ENCODE measurements at regions of chr2 and their contacts with region 1.

Region 1: GRCh38 chr2:96260404-96261260 is 5.2 kb downstream of the TMEM127 start:
- DNase-seq: peak; percentile 90 to 96 (median 93)
- H3K4me3 ChIP-seq: peak overlapping the region in 2 of 3 experiments; percentile 1 to 67
- H3K4me3 Mint-ChIP-seq: peak overlapping the region; percentile 69 to 84
- H3K27ac ChIP-seq: peak overlapping the region; percentile 94 to 99
- H3K27ac Mint-ChIP-seq: peak overlapping the region; percentile 97 to 100 (median 98)
- H3K4me1 ChIP-seq: peaks cover 82 to 94% of the 10 kb centered on the region in 2 donors
- H3K4me1 Mint-ChIP-seq: peaks cover 89% of the 10 kb centered on the region
- H3K27me3 ChIP-seq: no peaks in the 10 kb centered on the region
- H3K27me3 Mint-ChIP-seq: peaks cover 0 to 5% (median 0%) of the 10 kb centered on the region in 3 donors
- CTCF ChIP-seq: no peak

Region 2: GRCh38 chr2:96195410-96196066 is 65.1 kb before region 1 on chr2:
- intact Hi-C with region 1: no loop called
- DNase-seq: no peak
- H3K4me3 ChIP-seq: no peak overlapping the region
- H3K4me3 Mint-ChIP-seq: no peak overlapping the region
- H3K27ac ChIP-seq: peak overlapping the region in 1 of 2 donors; percentile 50
- H3K27ac Mint-ChIP-seq: peak overlapping the region in 2 of 7 donors; percentile 52 to 85
- H3K4me1 ChIP-seq: peaks cover 16 to 25% of the 10 kb centered on the region in 2 donors
- H3K4me1 Mint-ChIP-seq: peaks cover 26% of the 10 kb centered on the region
- H3K27me3 ChIP-seq: no peaks in the 10 kb centered on the region
- H3K27me3 Mint-ChIP-seq: no peaks in the 10 kb centered on the region
- CTCF ChIP-seq: no peak

Region 3: DNA sequence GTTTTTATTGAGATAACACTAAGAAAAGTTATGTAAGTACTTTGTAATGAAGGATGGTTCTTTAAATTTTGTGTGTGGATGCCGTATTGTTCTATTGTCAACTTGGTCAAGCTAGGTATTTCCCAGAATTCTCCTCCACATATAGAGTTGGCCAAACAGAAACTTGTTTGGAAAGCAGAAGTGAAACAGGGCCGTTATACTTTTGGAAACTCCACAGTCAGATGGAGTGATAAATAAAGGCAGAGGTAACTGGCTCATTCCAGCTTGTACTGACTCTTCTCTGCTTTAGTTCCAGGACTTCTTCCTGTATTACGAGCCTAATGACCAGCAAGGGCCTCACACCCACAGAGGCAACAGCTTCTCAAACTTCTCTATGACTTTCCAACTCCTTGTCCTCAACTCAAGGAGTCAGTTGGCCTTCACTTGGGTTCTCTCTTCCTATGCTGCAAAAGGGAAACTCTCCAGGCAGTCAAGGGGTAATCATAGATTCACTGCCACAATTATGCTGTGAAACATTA is 35.6 kb before region 1 on chr2:
- intact Hi-C with region 1: loop called in 1 of 2 experiments (anchors 5 kb)
- DNase-seq: peak; percentile 60 to 96 (median 87)
- H3K4me3 ChIP-seq: peak overlapping the region in 1 of 3 experiments; percentile 51
- H3K4me3 Mint-ChIP-seq: peak overlapping the region in 1 of 2 donors; percentile 33
- H3K27ac ChIP-seq: peak overlapping the region; percentile 89 to 90
- H3K27ac Mint-ChIP-seq: peak overlapping the region; percentile 78 to 97 (median 96)
- H3K4me1 ChIP-seq: peaks cover 40% of the 10 kb centered on the region in 2 donors
- H3K4me1 Mint-ChIP-seq: peaks cover 40% of the 10 kb centered on the region
- H3K27me3 ChIP-seq: no peaks in the 10 kb centered on the region
- H3K27me3 Mint-ChIP-seq: no peaks in the 10 kb centered on the region
- CTCF ChIP-seq: no peak

Region 4: DNA sequence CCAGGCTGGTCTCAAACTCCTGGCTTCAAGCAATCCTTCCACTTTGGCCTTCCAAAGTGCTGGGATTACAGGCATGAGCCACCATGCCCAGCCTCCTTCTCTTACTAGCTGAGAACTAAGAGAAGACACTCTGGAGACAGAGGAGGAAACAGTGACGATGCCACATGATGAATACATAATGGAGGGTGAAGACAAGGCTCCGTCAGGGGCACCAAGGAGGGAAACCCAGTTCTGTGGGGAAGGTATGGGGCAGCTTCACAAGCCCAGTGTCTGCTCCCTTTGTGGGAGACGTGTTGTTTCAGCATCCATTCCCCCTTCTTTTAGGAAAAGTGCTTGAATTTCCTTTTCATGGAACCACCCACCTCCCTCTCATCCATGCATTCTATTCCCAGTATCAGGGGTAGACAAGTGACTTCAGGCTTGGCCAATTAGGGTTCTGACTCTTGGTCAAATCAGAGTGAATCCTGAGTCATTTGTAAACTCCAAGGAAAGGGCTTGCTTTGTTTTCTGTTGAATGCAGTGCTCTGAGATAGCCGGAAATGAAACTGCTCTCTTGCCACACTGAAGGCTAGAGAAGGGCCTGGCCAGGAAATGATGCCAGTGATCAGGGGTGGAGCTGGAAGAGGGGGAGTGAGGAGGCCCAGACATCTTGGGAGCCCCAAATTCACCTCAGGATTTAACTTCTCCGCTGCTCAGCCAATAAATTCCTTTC is 18.6 kb before region 1 on chr2:
- intact Hi-C with region 1: loop called (anchors 2 kb)
- DNase-seq: peak; percentile 92 to 97 (median 96)
- H3K4me3 ChIP-seq: peak overlapping the region; percentile 0 to 63 (median 24)
- H3K4me3 Mint-ChIP-seq: peak overlapping the region; percentile 60 to 83
- H3K27ac ChIP-seq: peak overlapping the region; percentile 78 to 97
- H3K27ac Mint-ChIP-seq: peak overlapping the region; percentile 98 to 100 (median 98)
- H3K4me1 ChIP-seq: peaks cover 73 to 79% of the 10 kb centered on the region in 2 donors
- H3K4me1 Mint-ChIP-seq: peaks cover 74% of the 10 kb centered on the region
- H3K27me3 ChIP-seq: no peaks in the 10 kb centered on the region
- H3K27me3 Mint-ChIP-seq: no peaks in the 10 kb centered on the region
- CTCF ChIP-seq: no peak

Region 5: GRCh38 chr2:96325041-96325883 is 64.6 kb after region 1 on chr2 and contains the start of gene ITPRIPL1:
- intact Hi-C with region 1: no loop called
- DNase-seq: no peak
- H3K4me3 ChIP-seq: peak within 1 kb of the TSS; percentile 68 to 86 (median 69)
- H3K4me3 Mint-ChIP-seq: peak within 1 kb of the TSS; percentile 91 to 97
- H3K27ac ChIP-seq: peak within 1 kb of the TSS in 1 of 2 donors; percentile 36
- H3K27ac Mint-ChIP-seq: peak within 1 kb of the TSS in 6 of 7 donors; percentile 5 to 82 (median 24)
- H3K4me1 ChIP-seq: peaks cover 33 to 40% of the 10 kb centered on the region in 2 donors
- H3K4me1 Mint-ChIP-seq: peaks cover 50% of the 10 kb centered on the region
- H3K27me3 ChIP-seq: peaks cover 0 to 5% of the 10 kb centered on the region in 2 donors
- H3K27me3 Mint-ChIP-seq: peaks cover 29 to 33% (median 29%) of the 10 kb centered on the region in 3 donors
- CTCF ChIP-seq: no peak
- polyA plus RNA-seq, gene ITPRIPL1: 0.18 to 0.50 (median 0.39) TPM